ENCODE measurements at regions of chr1 and their contacts with region 1.

Region 1: DNA sequence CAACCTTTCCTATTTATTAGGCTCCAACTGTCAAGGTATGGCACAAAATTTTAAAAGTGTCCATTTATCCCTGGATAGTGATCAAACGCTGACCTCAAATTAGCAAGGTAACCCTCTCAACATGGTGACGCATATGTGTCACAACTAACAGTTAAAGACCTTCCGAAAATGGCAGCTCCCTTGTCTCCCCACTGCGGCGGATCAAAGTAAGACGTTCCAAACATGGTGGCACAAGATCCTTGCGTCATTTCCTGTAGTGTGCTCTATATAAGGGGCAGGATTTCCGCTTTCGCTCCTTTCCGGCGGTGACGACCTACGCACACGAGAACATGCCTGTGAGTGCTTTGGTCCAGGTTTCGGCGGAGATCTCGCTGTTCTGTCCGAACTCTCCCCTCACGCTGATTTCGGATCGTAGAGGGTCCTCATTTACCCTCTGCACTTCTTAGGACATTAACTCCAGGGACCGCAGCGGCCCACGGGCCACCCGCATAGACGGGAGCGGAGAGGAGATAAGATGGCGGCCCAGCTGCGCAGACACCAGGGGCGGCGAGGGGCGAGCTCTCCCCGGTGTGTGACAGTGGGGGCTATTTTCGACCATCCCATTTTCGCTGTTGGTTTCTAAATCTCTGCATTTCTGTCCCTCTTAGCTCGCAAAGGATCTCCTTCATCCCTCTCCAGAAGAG is at the start of gene RPS27:
- DNase-seq: peak; percentile 85 to 98
- ATAC-seq: peak; percentile 88 to 95 (median 89)
- H3K4me3 ChIP-seq: peak within 1 kb of the TSS; percentile 84
- H3K4me3 Mint-ChIP-seq: peak within 1 kb of the TSS; percentile 94
- H3K27ac ChIP-seq: peak within 1 kb of the TSS; percentile 95
- H3K27ac Mint-ChIP-seq: peak within 1 kb of the TSS; percentile 98 to 99
- H3K4me1 ChIP-seq: peaks cover 43% of the 10 kb centered on the region
- H3K4me1 Mint-ChIP-seq: peaks cover 47 to 48% of the 10 kb centered on the region in 2 donors
- H3K27me3 ChIP-seq: peaks cover 2% of the 10 kb centered on the region
- H3K27me3 Mint-ChIP-seq: peaks cover 5 to 7% of the 10 kb centered on the region in 2 donors
- CTCF ChIP-seq: no peak
- total RNA-seq, gene RPS27: 2,073 to 2,763 (median 2,323) TPM

Region 2: GRCh38 chr1:153510984-153511410 is 479.6 kb before region 1 on chr1:
- intact Hi-C with region 1: loop called (anchors 5 kb)
- DNase-seq: peak; percentile 72 to 88
- ATAC-seq: peak; percentile 87 to 98 (median 97)
- H3K4me3 ChIP-seq: no peak overlapping the region
- H3K4me3 Mint-ChIP-seq: no peak overlapping the region
- H3K27ac ChIP-seq: no peak overlapping the region
- H3K27ac Mint-ChIP-seq: no peak overlapping the region
- H3K4me1 ChIP-seq: peaks cover 7% of the 10 kb centered on the region
- H3K4me1 Mint-ChIP-seq: peaks cover 0 to 6% of the 10 kb centered on the region in 2 donors
- H3K27me3 ChIP-seq: no peaks in the 10 kb centered on the region
- H3K27me3 Mint-ChIP-seq: no peaks in the 10 kb centered on the region
- CTCF ChIP-seq: peak; percentile 97

Region 3: DNA sequence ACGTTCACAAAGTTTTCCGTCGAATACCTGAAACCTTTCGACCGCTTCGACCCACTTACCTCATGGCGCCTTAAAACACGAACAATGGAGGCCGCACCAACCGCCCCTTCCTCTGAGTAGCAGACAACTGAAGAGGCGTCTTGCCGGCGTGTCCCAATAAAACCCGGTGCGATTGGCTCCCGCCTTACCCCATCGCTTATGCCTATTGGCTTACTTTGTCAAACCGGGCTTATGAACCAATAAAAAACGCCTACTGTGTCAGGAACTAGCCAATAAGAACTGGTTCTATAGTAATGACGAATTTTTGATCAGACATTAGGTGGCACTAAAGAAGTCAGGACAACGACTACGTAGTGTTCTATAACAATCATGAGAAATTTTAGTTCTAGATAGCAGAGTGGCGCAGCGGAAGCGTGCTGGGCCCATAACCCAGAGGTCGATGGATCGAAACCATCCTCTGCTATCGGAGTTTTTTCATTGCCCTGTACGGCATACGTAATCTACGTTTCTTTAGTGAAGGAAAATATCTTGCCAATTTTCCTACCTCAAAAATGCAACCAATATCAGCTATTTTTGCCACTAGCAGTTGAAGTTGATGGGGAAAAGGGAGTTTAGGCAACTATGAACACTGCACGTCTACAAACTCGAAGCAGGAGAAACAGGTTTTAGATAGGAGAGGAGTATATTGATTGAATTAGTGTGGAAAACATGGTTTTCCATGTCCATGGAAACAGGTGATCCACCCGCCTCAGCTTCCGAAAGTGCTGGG is 319.6 kb before region 1 on chr1 and contains the start of gene ILF2:
- intact Hi-C with region 1: loop called (anchors 2 kb)
- DNase-seq: peak; percentile 93 to 98
- ATAC-seq: peak; percentile 85 to 97 (median 91)
- H3K4me3 ChIP-seq: peak within 1 kb of the TSS; percentile 88
- H3K4me3 Mint-ChIP-seq: no peak within 1 kb of the TSS
- H3K27ac ChIP-seq: peak within 1 kb of the TSS; percentile 92
- H3K27ac Mint-ChIP-seq: no peak within 1 kb of the TSS
- H3K4me1 ChIP-seq: peaks cover 20% of the 10 kb centered on the region
- H3K4me1 Mint-ChIP-seq: peaks cover 8 to 10% of the 10 kb centered on the region in 2 donors
- H3K27me3 ChIP-seq: no peaks in the 10 kb centered on the region
- H3K27me3 Mint-ChIP-seq: no peaks in the 10 kb centered on the region
- CTCF ChIP-seq: peak; percentile 23
- total RNA-seq, gene ILF2: 97.6 to 134 (median 110) TPM

Region 4: DNA sequence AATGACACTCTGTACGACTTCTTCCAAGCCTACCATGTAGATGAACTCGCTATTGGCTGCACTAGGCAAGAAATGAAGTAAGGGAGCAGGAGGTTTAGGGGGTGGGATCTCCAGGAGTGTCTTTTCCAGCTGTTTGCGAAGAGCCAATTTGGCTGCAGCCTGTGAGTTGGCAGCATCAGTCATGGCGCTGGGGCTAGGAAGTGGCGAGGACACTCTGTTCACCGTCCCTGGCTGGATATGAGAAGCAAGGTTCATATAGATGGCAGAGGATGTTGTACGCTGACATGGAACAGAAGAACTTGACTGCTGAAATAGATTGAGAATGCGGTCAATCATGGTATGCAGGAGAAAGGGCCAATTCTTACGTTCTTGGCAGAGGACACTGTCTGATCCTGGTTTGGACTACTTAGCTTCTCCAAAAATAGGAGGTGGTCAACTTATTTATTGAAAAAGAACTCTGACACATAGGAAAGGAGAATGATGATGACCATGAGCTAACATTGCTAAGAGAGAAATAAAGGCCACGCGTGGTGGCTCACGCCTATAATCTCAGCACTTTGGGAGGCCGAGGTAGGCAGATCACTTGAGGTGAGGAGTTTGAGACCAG is 174.2 kb before region 1 on chr1:
- intact Hi-C with region 1: loop called (anchors 1 kb)
- DNase-seq: no peak
- ATAC-seq: no peak
- H3K4me3 ChIP-seq: no peak overlapping the region
- H3K4me3 Mint-ChIP-seq: no peak overlapping the region
- H3K27ac ChIP-seq: no peak overlapping the region
- H3K27ac Mint-ChIP-seq: no peak overlapping the region
- H3K4me1 ChIP-seq: no peaks in the 10 kb centered on the region
- H3K4me1 Mint-ChIP-seq: no peaks in the 10 kb centered on the region
- H3K27me3 ChIP-seq: no peaks in the 10 kb centered on the region
- H3K27me3 Mint-ChIP-seq: no peaks in the 10 kb centered on the region
- CTCF ChIP-seq: no peak

Region 5: DNA sequence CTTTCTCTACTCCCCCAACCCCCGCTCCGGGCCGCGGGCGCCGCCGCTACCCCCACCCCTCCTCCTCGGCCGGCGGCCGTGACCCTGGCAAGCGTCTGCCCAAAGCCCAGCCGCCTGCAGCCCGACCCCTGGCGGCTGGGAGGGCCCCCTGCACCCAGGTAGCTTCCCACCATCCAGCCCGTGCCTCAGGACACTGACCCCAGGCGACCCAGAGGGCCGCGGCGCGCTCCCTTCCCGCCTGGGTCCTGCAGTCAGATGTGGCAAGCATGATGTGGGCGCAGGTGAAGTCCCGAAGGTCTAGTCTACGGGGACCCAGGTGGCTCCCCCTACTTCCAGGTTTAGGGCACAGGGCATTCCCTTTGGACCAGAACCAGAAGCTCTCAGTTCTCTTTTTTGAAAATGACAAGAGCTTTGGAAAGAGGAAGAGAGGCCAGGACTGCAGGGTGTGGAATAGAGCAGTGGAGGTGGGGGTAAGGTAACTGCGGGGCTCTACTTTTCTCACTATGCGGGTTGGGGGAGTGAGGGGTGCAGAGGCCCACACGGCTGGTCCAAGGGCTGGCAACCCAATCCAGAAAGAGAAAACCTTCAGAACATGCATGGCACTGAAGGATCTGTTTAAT is 43.9 kb before region 1 on chr1 and contains the start of gene DENND4B:
- intact Hi-C with region 1: loop called (anchors 1 kb)
- DNase-seq: peak; percentile 77 to 86
- ATAC-seq: peak; percentile 65 to 79 (median 70)
- H3K4me3 ChIP-seq: peak within 1 kb of the TSS; percentile 89
- H3K4me3 Mint-ChIP-seq: peak within 1 kb of the TSS; percentile 94
- H3K27ac ChIP-seq: peak within 1 kb of the TSS; percentile 98
- H3K27ac Mint-ChIP-seq: peak within 1 kb of the TSS; percentile 92 to 96
- H3K4me1 ChIP-seq: peaks cover 44% of the 10 kb centered on the region
- H3K4me1 Mint-ChIP-seq: peaks cover 39 to 51% of the 10 kb centered on the region in 2 donors
- H3K27me3 ChIP-seq: no peaks in the 10 kb centered on the region
- H3K27me3 Mint-ChIP-seq: no peaks in the 10 kb centered on the region
- CTCF ChIP-seq: peak; percentile 84
- total RNA-seq, gene DENND4B: 244 to 322 (median 291) TPM

Region 6: GRCh38 chr1:153977250-153978240 is 13.1 kb before region 1 on chr1 and contains the start of gene JTB:
- intact Hi-C with region 1: loop called (anchors 2 kb)
- DNase-seq: peak; percentile 76 to 91
- ATAC-seq: peak; percentile 97 to 98 (median 97)
- H3K4me3 ChIP-seq: peak within 1 kb of the TSS; percentile 84
- H3K4me3 Mint-ChIP-seq: peak within 1 kb of the TSS; percentile 89
- H3K27ac ChIP-seq: peak within 1 kb of the TSS; percentile 37
- H3K27ac Mint-ChIP-seq: peak within 1 kb of the TSS; percentile 76 to 89
- H3K4me1 ChIP-seq: peaks cover 16% of the 10 kb centered on the region
- H3K4me1 Mint-ChIP-seq: peaks cover 25 to 30% of the 10 kb centered on the region in 2 donors
- H3K27me3 ChIP-seq: no peaks in the 10 kb centered on the region
- H3K27me3 Mint-ChIP-seq: peaks cover 0 to 4% of the 10 kb centered on the region in 2 donors
- CTCF ChIP-seq: no peak
- total RNA-seq, gene JTB: 96.9 to 107 (median 101) TPM

Measured in natural killer cell (primary cell).